Activated CD4-positive, alpha-beta T cell treated with anti-CD3 and anti-CD28 coated beads, Interleukin-2, amount 10 ng/mL, durations not matched to agents 24 days and 14 days (primary cell): ENCODE measurements at regions of chr7 and their contacts with region 1.

Region 1: GRCh38 chr7:11177793-11178192 is 204.1 kb downstream of the PHF14 start:
- DNase-seq: no peak
- H3K4me3 Mint-ChIP-seq: no peak overlapping the region
- H3K27ac Mint-ChIP-seq: no peak overlapping the region
- H3K4me1 Mint-ChIP-seq: no peaks in the 10 kb centered on the region
- H3K27me3 Mint-ChIP-seq: peaks cover 2% of the 10 kb centered on the region

Region 2: DNA sequence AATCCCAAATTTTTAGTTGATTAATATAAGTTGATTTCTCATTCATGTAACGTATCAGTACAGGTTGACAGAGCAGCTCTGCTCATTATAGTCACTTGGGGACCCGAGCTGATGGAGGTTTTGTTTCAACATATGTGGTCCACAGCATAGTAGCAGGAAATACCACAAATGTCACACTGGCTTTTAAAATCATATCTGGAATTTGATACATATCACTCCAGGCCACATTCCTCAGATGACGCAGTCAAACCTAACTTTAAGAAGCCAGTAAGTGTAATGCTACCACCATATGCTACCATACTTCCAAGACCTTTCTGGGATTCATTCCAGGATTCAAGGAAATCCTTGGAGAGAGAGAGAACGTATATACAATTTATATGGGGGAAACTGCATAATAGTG is 47.8 kb before region 1 on chr7:
- intact Hi-C with region 1: loop called (anchors 5 kb)
- DNase-seq: no peak
- H3K4me3 Mint-ChIP-seq: no peak overlapping the region
- H3K27ac Mint-ChIP-seq: no peak overlapping the region
- H3K4me1 Mint-ChIP-seq: peaks cover 28% of the 10 kb centered on the region
- H3K27me3 Mint-ChIP-seq: no peaks in the 10 kb centered on the region